Activated CD4-positive, alpha-beta memory T cell treated with anti-CD3 and anti-CD28 coated beads for 36 hours (primary cell): ENCODE measurements at regions of chr10 and their contacts with region 1.

Region 1: DNA sequence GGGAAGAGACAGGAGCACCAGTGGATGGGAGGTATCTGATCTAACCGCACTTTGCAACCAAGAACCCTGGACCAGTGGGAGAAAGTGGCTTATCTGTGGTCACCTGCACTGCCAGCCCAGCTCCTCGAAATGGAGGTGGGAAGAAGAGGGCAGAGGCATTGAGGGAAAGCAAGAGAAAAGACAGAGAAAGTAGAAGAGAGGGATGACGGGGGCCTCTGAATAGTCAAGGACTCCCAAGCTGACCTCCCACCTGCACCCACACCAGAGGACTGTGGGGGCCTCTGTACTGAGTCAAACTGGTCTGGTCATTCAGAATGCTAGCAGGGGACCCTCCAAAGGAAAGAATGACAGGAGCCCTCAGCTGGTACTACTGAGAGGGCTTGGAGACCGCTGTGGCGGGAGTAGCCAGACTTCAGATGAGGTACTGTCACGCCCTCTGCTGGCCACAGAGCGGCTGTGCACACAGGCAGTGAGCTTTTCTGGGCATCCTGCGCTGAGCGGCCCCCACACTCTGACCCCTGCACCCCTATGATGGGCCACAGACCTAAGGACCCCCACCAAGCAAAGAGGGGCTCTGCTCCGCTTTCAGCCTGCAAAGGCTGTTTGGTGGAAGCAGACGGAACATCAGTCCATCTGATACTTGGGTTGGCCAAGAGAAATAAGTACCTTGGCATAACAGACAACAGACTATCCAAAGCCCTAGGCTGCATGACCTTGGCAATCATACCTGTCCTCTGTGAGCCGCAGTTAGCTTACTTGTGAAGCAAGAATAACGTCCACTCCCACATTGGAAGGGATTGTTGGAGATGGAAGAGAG is 112.9 kb downstream of the COL13A1 start:
- DNase-seq: peak; percentile 69
- H3K4me3 Mint-ChIP-seq: no peak overlapping the region
- H3K27ac Mint-ChIP-seq: no peak overlapping the region
- H3K4me1 Mint-ChIP-seq: no peaks in the 10 kb centered on the region
- H3K27me3 Mint-ChIP-seq: peaks cover 2% of the 10 kb centered on the region

Region 2: DNA sequence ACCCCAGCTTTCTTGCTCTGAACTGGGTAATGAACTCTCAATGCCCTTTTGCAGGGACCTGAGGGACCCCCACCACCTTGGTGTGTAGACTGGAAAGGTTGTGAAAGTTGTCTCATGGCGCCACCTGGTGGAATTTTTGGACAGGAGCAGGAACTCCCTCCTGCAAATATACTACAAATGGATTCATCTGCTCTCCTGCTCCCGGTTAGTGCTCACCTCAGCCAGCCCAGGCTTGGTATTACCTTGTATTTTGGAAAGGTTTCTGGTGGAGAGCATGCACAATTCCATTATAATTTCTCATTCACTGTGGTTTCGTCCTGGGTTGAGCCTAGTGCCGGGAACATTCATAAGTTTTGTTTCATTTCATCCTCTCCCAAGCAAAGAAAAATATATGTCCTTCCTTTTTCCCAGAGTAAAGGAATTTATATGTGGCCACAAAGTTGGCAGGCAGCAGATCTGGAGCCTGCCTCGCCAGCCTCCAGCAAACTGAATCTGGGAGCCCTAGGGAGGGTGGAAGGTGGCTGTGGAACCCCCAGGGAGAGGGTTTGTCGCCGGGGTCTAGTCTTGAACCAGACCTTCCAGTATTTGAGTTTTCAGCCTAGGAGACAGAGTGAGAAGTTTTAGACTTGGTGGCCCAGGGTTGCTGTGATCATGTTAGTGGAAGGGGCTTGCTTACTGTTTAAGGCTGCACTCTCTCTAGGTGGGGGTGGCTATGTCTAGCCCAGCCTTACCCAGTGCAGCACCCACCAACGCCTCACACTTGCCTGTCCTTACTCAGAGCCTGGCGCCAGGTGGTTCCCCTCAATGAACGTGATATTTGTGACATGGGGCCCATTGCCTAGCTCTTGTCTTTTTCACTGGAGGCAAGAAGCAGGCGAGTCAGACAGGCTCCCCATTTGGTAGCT is 275.1 kb before region 1 on chr10:
- CTCF ChIA-PET with region 1: interaction called, 10 read pairs
- POLR2A ChIA-PET with region 1: no interaction called
- intact Hi-C with region 1: loop called (anchors 10 kb)
- DNase-seq: peak; percentile 76
- H3K4me3 Mint-ChIP-seq: no peak overlapping the region
- H3K27ac Mint-ChIP-seq: no peak overlapping the region
- H3K4me1 Mint-ChIP-seq: no peaks in the 10 kb centered on the region
- H3K27me3 Mint-ChIP-seq: no peaks in the 10 kb centered on the region

Region 3: GRCh38 chr10:69644658-69645295 is 269.8 kb before region 1 on chr10:
- CTCF ChIA-PET with region 1: interaction called, 10 read pairs
- POLR2A ChIA-PET with region 1: no interaction called
- intact Hi-C with region 1: loop called (anchors 10 kb)
- DNase-seq: peak; percentile 62
- H3K4me3 Mint-ChIP-seq: no peak overlapping the region
- H3K27ac Mint-ChIP-seq: no peak overlapping the region
- H3K4me1 Mint-ChIP-seq: no peaks in the 10 kb centered on the region
- H3K27me3 Mint-ChIP-seq: no peaks in the 10 kb centered on the region

Region 4: DNA sequence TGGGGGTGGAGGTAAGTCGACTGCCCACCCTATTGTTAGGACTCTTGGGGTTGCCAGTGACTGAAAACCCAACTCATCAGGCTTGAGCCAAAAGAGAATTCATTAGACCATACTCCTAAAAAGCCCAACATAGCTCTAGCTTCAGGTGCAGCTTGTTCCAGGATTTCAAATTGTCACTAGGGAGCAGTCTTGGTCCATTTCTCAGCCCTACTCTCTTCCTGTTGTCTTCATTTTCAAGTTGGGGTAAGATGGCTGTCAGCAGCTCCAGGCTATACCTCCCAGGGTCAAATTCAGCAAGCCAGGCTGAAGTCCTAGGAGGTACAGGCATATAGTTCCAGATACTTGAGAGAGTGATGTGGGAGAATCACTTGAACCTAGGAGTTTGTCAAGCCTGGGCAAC is 127.8 kb before region 1 on chr10:
- CTCF ChIA-PET with region 1: interaction called, 22 read pairs
- POLR2A ChIA-PET with region 1: no interaction called
- intact Hi-C with region 1: no loop called
- DNase-seq: no peak
- H3K4me3 Mint-ChIP-seq: no peak overlapping the region
- H3K27ac Mint-ChIP-seq: no peak overlapping the region
- H3K4me1 Mint-ChIP-seq: no peaks in the 10 kb centered on the region
- H3K27me3 Mint-ChIP-seq: peaks cover 14% of the 10 kb centered on the region

Region 5: DNA sequence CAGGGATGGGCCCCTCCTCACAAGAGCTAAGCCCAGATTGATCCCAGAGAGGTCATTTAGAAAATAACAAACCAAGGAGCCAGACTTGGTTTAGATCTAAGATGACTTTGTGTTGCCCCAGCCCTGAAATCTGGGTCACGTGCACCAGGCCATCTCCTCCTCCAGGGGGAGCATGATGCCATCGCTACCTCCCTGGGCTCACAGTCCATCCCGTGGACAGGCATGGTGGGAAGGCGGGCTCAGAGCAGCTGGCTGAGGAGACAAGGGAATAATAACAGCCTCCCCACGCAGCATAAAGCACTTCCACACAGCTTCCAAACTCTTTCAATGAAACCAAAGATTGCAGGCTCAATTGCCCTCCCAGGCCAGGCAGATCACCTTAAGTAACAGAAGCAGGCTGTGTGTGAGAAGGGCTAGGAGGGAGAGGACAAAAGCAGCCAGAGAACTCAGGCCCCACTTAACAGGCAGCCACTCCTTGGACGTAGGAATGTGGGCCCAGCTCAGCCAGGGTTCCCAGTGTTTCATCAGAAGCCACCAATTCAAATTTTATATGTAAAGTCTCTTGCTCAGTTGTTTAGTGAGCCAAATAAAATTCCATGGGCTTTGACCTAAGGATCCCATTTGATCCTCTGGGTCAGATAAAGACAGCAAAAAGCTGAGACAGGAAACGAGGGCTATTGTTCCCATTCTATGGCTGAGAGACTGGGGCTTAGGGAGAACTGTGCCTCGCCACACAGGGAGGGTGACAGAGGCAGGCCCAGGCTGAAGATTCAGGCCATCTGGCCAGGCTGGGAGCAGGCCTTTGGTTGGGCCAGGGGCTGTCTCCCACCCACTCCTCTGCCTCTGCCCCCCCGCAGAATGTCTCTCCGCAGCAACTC is 12.7 kb before region 1 on chr10:
- CTCF ChIA-PET with region 1: interaction called, 35 read pairs
- POLR2A ChIA-PET with region 1: no interaction called
- intact Hi-C with region 1: no loop called
- DNase-seq: peak; percentile 32
- H3K4me3 Mint-ChIP-seq: no peak overlapping the region
- H3K27ac Mint-ChIP-seq: no peak overlapping the region
- H3K4me1 Mint-ChIP-seq: no peaks in the 10 kb centered on the region
- H3K27me3 Mint-ChIP-seq: no peaks in the 10 kb centered on the region

Region 6: GRCh38 chr10:69928339-69928738 is 13.7 kb after region 1 on chr10:
- CTCF ChIA-PET with region 1: interaction called, 14 read pairs
- POLR2A ChIA-PET with region 1: no interaction called
- intact Hi-C with region 1: no loop called
- DNase-seq: no peak
- H3K4me3 Mint-ChIP-seq: no peak overlapping the region
- H3K27ac Mint-ChIP-seq: no peak overlapping the region
- H3K4me1 Mint-ChIP-seq: no peaks in the 10 kb centered on the region
- H3K27me3 Mint-ChIP-seq: peaks cover 12% of the 10 kb centered on the region

Region 7: DNA sequence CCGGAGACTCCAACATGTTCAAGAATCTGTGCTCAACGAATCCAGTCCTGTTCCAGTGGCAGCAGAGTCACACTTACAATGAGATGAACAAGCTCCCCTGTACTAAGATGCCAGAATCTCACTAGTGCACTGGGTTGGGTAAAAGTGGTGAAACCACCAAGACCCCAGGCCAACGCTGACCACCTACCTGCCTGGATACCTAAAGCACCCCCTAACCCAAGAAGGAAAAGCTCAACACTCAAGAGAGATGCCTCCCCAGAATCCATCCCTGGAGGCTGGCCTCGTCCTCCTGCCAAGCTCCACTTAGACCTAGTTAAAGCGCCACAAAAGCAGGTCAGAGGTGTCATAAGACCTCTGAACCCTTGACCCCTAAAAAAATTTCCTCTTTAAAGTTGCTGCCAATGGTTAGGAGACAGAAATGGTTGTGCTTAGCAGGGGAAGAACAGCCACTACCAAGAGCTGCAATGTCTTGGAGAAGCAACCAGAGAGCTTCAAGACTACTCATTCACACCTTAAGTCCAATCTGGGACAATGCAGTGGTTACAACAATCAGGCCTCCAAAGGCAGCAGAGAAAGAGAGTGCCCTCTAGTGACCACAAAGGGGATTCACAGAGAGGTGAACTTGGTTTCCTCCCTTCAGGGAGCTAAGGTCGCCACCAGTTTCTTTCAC is 43.4 kb after region 1 on chr10:
- CTCF ChIA-PET with region 1: interaction called, 14 read pairs
- POLR2A ChIA-PET with region 1: no interaction called
- intact Hi-C with region 1: no loop called
- DNase-seq: peak; percentile 21
- H3K4me3 Mint-ChIP-seq: no peak overlapping the region
- H3K27ac Mint-ChIP-seq: no peak overlapping the region
- H3K4me1 Mint-ChIP-seq: no peaks in the 10 kb centered on the region
- H3K27me3 Mint-ChIP-seq: peaks cover 9% of the 10 kb centered on the region